GM12878 (cell line): ENCODE measurements at regions of chr9 and their contacts with region 1.

Region 1: GRCh38 chr9:37329576-37329975 is 92.9 kb upstream of the GRHPR start:
- DNase-seq: no peak
- ATAC-seq: peak; percentile 65
- H3K4me3 ChIP-seq: no peak overlapping the region
- H3K27ac ChIP-seq: no peak overlapping the region
- H3K4me1 ChIP-seq: peaks cover 18% of the 10 kb centered on the region
- H3K27me3 ChIP-seq: no peaks in the 10 kb centered on the region
- CTCF ChIP-seq: peak; percentile 47 to 73 (median 47); a peak in 4 of 6 replicates
- EP300 ChIP-seq: no peak
- POLR2A ChIP-seq: no peak
- RAD21 ChIP-seq: peak; percentile 79

Region 2: DNA sequence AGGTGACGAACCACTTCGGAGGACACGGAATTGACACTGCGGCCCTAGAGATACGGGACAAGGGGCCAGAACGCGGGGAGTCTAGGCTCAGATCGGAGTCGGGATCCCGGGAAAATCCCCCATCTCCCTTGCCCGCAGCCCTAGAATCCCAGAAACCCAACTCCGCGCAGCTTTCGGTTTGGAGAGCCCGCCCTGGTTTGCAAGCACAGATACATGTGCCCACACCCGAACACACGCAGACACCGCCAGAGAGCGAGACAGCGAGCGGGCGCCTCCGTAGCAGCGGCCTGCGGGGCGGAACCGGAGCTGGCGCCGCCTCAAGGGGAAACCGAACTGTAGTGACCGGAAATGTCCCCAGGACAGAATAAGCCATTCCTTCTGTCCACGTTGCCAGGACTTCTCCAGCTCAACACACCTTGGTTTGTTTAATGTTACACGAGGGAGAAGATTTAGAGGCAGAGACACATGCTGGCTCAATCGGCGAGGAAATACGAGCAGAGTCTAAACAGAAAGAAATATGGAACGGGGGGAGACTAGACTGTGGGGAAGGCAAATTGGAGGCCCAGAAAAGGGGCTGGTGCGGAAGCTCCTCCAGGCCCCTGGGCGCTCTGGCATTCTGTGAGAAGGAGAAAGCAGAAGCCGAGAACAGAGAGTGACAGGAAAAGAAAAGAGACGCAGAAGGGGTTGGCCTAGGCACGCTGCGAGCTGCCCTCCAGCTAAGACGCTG is 292.6 kb before region 1 on chr9:
- CTCF ChIA-PET with region 1: interaction called, 9 read pairs
- POLR2A ChIA-PET with region 1: interaction called, 13 read pairs
- RAD21 ChIA-PET with region 1: interaction called, 14 read pairs
- SMC1A ChIA-PET with region 1: interaction called, 5 read pairs
- in situ Hi-C with region 1: no loop called
- intact Hi-C with region 1: loop called (anchors 5 kb)
- DNase-seq: no peak
- ATAC-seq: peak; percentile 52
- H3K4me3 ChIP-seq: peak overlapping the region; percentile 96
- H3K27ac ChIP-seq: peak overlapping the region; percentile 92
- H3K4me1 ChIP-seq: peaks cover 8% of the 10 kb centered on the region
- H3K27me3 ChIP-seq: no peaks in the 10 kb centered on the region
- CTCF ChIP-seq: 0 out of 6 replicates have a peak, but pooled peaks of 1 of the 3 experiments have one; percentile 2
- EP300 ChIP-seq: no peak
- POLR2A ChIP-seq: 0 out of 2 replicates have a peak, but pooled peaks have one; percentile 2
- RAD21 ChIP-seq: no peak

Region 3: GRCh38 chr9:37209431-37210386 is 119.9 kb before region 1 on chr9:
- CTCF ChIA-PET with region 1: interaction called, 6 read pairs
- POLR2A ChIA-PET with region 1: no interaction called
- RAD21 ChIA-PET with region 1: interaction called, 10 read pairs
- SMC1A ChIA-PET with region 1: interaction called, 10 read pairs
- in situ Hi-C with region 1: no loop called
- intact Hi-C with region 1: no loop called
- DNase-seq: no peak
- ATAC-seq: peak; percentile 51
- H3K4me3 ChIP-seq: no peak overlapping the region
- H3K27ac ChIP-seq: peak overlapping the region; percentile 73
- H3K4me1 ChIP-seq: peaks cover 31% of the 10 kb centered on the region
- H3K27me3 ChIP-seq: no peaks in the 10 kb centered on the region
- CTCF ChIP-seq: peak in 2 of 3 experiments; percentile 16 to 21; a peak in 3 of 6 replicates
- EP300 ChIP-seq: no peak
- POLR2A ChIP-seq: no peak
- RAD21 ChIP-seq: peak; percentile 22; the same call in 1 of the 2 replicates

Region 4: DNA sequence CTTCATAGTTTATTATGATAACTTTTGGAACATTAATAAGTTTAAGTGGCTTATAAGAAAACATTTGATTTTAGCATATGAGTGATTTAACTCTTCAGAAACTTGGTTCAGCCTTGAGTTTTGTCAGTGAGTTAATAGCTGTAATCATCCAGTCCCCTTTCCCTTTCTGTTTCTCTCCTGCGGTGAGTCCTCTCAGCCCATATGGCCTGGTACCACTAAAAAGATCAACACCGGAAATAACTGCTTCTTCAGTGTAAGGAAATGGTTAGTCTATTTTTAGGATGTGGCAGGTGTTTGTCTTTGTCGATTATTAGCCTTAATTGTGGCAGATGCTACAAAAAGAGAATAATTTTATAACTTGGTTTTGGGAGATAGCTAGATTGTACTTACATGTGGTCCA is 27.3 kb before region 1 on chr9:
- CTCF ChIA-PET with region 1: interaction called, 32 read pairs
- POLR2A ChIA-PET with region 1: interaction called, 9 read pairs
- RAD21 ChIA-PET with region 1: interaction called, 42 read pairs
- SMC1A ChIA-PET with region 1: interaction called, 65 read pairs
- in situ Hi-C with region 1: no loop called
- intact Hi-C with region 1: no loop called
- DNase-seq: peak; percentile 90
- ATAC-seq: peak; percentile 91
- H3K4me3 ChIP-seq: peak overlapping the region; percentile 43; the same call in 1 of the 2 replicates
- H3K27ac ChIP-seq: peak overlapping the region; percentile 95
- H3K4me1 ChIP-seq: peaks cover 48% of the 10 kb centered on the region
- H3K27me3 ChIP-seq: no peaks in the 10 kb centered on the region
- CTCF ChIP-seq: no peak
- EP300 ChIP-seq: peak; percentile 82 to 93
- POLR2A ChIP-seq: no peak
- RAD21 ChIP-seq: peak; percentile 31; the same call in 1 of the 2 replicates

Region 5: DNA sequence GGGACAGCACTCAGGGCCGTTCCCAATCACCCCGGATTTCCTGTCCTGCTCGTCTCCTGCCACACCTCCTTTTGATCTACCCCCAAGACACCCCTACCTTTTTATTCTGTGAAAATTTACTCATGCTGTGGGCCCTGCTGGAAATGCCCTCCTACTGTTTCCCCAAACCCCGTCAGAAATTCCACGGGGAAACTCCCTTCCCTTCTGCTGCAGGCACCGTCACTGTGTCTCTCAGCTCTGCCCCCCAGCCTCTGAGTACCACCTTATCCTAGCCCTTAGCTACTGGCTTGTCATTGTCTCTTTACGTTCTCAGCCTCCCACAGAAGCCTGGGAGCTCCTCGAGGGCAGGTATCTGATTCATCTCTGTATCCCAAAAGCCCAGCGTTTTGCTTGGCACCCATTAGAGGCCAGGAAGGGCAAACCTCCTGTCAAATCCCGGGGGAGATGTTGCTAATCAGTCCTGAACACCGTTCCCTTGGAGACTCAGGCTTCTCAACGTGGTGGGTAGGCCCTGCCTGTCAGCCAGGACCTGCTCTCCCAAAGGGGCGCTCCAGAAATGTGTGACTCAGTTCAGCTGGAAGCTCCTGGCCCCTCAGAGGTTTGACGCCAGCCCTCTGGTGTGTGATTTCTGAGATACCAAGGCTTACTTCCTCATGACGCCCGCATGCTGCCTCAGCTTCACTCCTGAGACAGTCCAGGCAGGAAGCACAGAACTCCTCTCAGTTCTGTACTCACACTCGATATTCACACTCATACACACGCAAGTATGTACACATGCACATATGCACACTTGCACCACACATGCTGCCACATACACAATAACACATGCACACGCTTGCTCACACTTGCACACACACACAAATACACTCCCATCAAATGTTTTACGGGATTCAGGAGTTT is 42.2 kb after region 1 on chr9:
- CTCF ChIA-PET with region 1: interaction called, 8 read pairs
- POLR2A ChIA-PET with region 1: interaction called, 4 read pairs
- RAD21 ChIA-PET with region 1: interaction called, 5 read pairs
- SMC1A ChIA-PET with region 1: interaction called, 12 read pairs
- in situ Hi-C with region 1: no loop called
- intact Hi-C with region 1: no loop called
- DNase-seq: peak; percentile 63
- ATAC-seq: peak; percentile 44
- H3K4me3 ChIP-seq: no peak overlapping the region
- H3K27ac ChIP-seq: peak overlapping the region; percentile 97
- H3K4me1 ChIP-seq: peaks cover 78% of the 10 kb centered on the region
- H3K27me3 ChIP-seq: no peaks in the 10 kb centered on the region
- CTCF ChIP-seq: no peak
- EP300 ChIP-seq: peak in 1 of 2 experiments; percentile 33; a peak in 2 of 4 replicates
- POLR2A ChIP-seq: peak; percentile 7; the same call in 1 of the 2 replicates
- RAD21 ChIP-seq: no peak

Region 6: GRCh38 chr9:37415011-37415719 is 85.6 kb after region 1 on chr9:
- CTCF ChIA-PET with region 1: interaction called, 20 read pairs
- POLR2A ChIA-PET with region 1: no interaction called
- RAD21 ChIA-PET with region 1: interaction called, 11 read pairs
- SMC1A ChIA-PET with region 1: interaction called, 16 read pairs
- in situ Hi-C with region 1: no loop called
- intact Hi-C with region 1: no loop called
- DNase-seq: no peak
- ATAC-seq: peak; percentile 50
- H3K4me3 ChIP-seq: no peak overlapping the region
- H3K27ac ChIP-seq: peak overlapping the region; percentile 45
- H3K4me1 ChIP-seq: peaks cover 46% of the 10 kb centered on the region
- H3K27me3 ChIP-seq: no peaks in the 10 kb centered on the region
- CTCF ChIP-seq: peak; percentile 82 to 89 (median 88)
- EP300 ChIP-seq: no peak
- POLR2A ChIP-seq: no peak
- RAD21 ChIP-seq: peak; percentile 80

Region 7: GRCh38 chr9:37574241-37574721 is 244.7 kb after region 1 on chr9:
- CTCF ChIA-PET with region 1: no interaction called
- POLR2A ChIA-PET with region 1: no interaction called
- RAD21 ChIA-PET with region 1: no interaction called
- SMC1A ChIA-PET with region 1: no interaction called
- in situ Hi-C with region 1: no loop called
- intact Hi-C with region 1: no loop called
- DNase-seq: no peak
- ATAC-seq: no peak
- H3K4me3 ChIP-seq: no peak overlapping the region
- H3K27ac ChIP-seq: no peak overlapping the region
- H3K4me1 ChIP-seq: peaks cover 5% of the 10 kb centered on the region
- H3K27me3 ChIP-seq: no peaks in the 10 kb centered on the region
- CTCF ChIP-seq: no peak
- EP300 ChIP-seq: no peak
- POLR2A ChIP-seq: no peak
- RAD21 ChIP-seq: no peak